ENCODE measurements at regions of chr2 and their contacts with region 1.

Region 1: GRCh38 chr2:128027801-128028667 is at the start of gene SAP130:
- DNase-seq: peak; percentile 98
- ATAC-seq: peak; percentile 76 to 89 (median 78)
- H3K4me3 ChIP-seq: peak within 1 kb of the TSS; percentile 74
- H3K4me3 Mint-ChIP-seq: peak within 1 kb of the TSS; percentile 97
- H3K27ac ChIP-seq: peak within 1 kb of the TSS; percentile 75
- H3K27ac Mint-ChIP-seq: peak within 1 kb of the TSS; percentile 85 to 96
- H3K4me1 ChIP-seq: peaks cover 7% of the 10 kb centered on the region
- H3K4me1 Mint-ChIP-seq: peaks cover 9 to 26% of the 10 kb centered on the region in 2 donors
- H3K27me3 ChIP-seq: peaks cover 2% of the 10 kb centered on the region
- H3K27me3 Mint-ChIP-seq: peaks cover 6 to 13% of the 10 kb centered on the region in 2 donors
- CTCF ChIP-seq: no peak
- total RNA-seq, gene SAP130: 33.6 to 43.7 (median 36.2) TPM

Region 2: DNA sequence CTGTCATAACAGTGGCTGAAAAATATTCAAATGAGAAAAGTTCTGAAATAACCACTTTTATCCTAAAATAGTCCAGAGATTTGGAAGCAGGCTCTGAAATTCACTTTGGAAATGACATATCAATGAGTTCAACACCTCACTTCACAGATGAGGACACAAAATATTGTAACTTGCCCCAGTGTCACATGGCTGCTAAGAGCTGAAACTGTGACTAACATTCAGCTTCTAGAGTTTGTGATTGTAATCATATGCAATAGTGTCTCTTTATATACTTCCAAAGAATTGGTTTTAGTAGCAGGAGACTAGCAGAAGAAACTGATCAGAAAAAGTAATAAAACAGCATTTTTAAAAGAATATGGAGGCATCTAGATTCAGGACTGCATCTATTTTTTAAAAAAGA is 274.7 kb before region 1 on chr2:
- intact Hi-C with region 1: no loop called
- DNase-seq: no peak
- ATAC-seq: no peak
- H3K4me3 ChIP-seq: no peak overlapping the region
- H3K4me3 Mint-ChIP-seq: no peak overlapping the region
- H3K27ac ChIP-seq: no peak overlapping the region
- H3K27ac Mint-ChIP-seq: peak overlapping the region in 1 of 2 donors; percentile 23
- H3K4me1 ChIP-seq: peaks cover 7% of the 10 kb centered on the region
- H3K4me1 Mint-ChIP-seq: peaks cover 5 to 6% of the 10 kb centered on the region in 2 donors
- H3K27me3 ChIP-seq: no peaks in the 10 kb centered on the region
- H3K27me3 Mint-ChIP-seq: no peaks in the 10 kb centered on the region
- CTCF ChIP-seq: no peak

Region 3: DNA sequence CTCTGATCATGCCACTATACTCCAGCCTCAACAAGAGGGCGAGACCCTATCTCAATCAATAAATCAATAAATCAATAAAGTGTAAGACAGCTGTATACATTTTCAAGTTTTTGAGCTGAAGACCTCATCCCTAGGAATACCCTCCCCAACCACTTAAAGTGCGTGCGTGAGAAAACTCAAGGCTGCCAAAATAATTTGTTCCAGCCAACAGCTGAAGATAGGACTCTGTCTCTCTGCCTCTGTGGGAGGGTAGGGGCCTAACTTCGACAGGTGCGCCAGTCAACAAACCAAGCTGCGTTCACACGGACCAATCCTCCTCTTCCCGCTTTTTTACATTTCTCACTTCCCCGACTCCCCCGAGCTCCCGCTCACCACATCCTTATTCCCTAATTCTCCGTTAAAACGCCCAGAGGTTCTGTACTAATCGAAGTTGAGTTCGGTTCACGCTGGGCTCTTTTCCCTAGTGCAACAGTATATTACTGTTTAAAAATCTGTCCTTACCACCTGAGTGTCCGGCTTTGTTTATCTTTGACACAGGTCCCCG is 170.7 kb before region 1 on chr2:
- intact Hi-C with region 1: loop called (anchors 5 kb)
- DNase-seq: peak in 1 of 2 donors; percentile 48
- ATAC-seq: no peak
- H3K4me3 ChIP-seq: peak overlapping the region; percentile 70
- H3K4me3 Mint-ChIP-seq: peak overlapping the region; percentile 92
- H3K27ac ChIP-seq: peak overlapping the region; percentile 64
- H3K27ac Mint-ChIP-seq: peak overlapping the region; percentile 82 to 89
- H3K4me1 ChIP-seq: peaks cover 33% of the 10 kb centered on the region
- H3K4me1 Mint-ChIP-seq: peaks cover 24 to 46% of the 10 kb centered on the region in 2 donors
- H3K27me3 ChIP-seq: no peaks in the 10 kb centered on the region
- H3K27me3 Mint-ChIP-seq: no peaks in the 10 kb centered on the region
- CTCF ChIP-seq: no peak

Region 4: DNA sequence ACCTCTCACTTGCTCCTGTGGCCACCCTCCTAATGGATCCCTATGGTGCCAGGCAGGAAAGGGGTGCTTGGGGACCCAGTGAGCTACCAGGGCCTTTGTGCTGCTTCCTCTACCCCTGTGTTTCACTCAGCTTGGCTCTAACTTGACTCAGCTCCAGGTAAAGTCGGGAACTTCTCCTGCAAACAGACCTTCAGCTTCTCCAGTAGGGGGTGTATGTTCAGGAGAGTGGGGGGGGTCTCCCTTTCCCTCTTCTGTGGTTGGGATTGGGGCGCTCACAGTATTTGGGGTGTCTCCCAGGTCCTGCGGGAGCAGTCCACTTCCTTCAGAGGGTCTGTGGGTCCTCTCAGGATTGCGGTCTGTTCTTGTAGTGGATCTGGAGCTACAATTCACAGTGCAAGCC is 26.1 kb after region 1 on chr2:
- intact Hi-C with region 1: no loop called
- DNase-seq: no peak
- ATAC-seq: no peak
- H3K4me3 ChIP-seq: no peak overlapping the region
- H3K4me3 Mint-ChIP-seq: no peak overlapping the region
- H3K27ac ChIP-seq: no peak overlapping the region
- H3K27ac Mint-ChIP-seq: no peak overlapping the region
- H3K4me1 ChIP-seq: no peaks in the 10 kb centered on the region
- H3K4me1 Mint-ChIP-seq: no peaks in the 10 kb centered on the region
- H3K27me3 ChIP-seq: peaks cover 2% of the 10 kb centered on the region
- H3K27me3 Mint-ChIP-seq: peaks cover 29 to 36% of the 10 kb centered on the region in 2 donors
- CTCF ChIP-seq: no peak

Region 5: DNA sequence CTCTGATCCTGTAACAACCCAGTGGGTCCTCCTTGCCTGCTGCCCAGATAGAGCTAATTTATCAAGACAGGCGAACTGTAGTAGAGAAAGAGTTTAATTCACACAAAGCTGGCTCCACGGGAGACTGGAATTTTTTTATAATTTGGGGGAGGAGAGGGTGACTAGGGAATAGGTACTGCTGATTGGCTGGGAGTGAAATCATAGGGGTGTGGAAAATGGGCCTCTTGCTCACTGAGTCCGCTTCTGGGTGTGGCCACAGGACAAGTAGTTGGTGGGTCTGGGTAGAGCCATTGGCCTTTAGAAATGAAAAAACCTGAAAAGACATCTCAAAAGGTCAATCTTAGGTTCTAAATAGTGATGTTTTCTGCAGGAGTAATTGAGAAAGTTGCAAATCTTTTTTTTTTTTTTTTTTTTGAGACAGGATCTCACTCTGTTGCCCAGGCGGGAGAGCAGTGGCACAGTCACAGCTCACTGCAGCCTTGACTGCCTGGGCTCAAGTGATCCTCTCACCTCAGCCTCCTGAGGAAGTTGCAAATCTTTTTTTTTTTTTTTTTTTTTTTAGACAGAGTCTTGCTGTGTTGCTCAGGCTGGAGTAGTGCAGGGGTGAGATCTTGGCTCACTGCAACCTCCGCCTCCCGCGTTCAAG is 48.5 kb after region 1 on chr2:
- intact Hi-C with region 1: no loop called
- DNase-seq: no peak
- ATAC-seq: no peak
- H3K4me3 ChIP-seq: no peak overlapping the region
- H3K4me3 Mint-ChIP-seq: no peak overlapping the region
- H3K27ac ChIP-seq: no peak overlapping the region
- H3K27ac Mint-ChIP-seq: no peak overlapping the region
- H3K4me1 ChIP-seq: no peaks in the 10 kb centered on the region
- H3K4me1 Mint-ChIP-seq: no peaks in the 10 kb centered on the region
- H3K27me3 ChIP-seq: no peaks in the 10 kb centered on the region
- H3K27me3 Mint-ChIP-seq: peaks cover 3 to 14% of the 10 kb centered on the region in 2 donors
- CTCF ChIP-seq: no peak

Region 6: GRCh38 chr2:128090945-128091725 is 63.1 kb after region 1 on chr2 and contains the start of gene UGGT1:
- intact Hi-C with region 1: loop called (anchors 1 kb)
- DNase-seq: peak; percentile 89 to 98
- ATAC-seq: peak; percentile 94 to 99 (median 95)
- H3K4me3 ChIP-seq: peak within 1 kb of the TSS; percentile 94
- H3K4me3 Mint-ChIP-seq: peak within 1 kb of the TSS; percentile 96
- H3K27ac ChIP-seq: peak within 1 kb of the TSS; percentile 85
- H3K27ac Mint-ChIP-seq: peak within 1 kb of the TSS; percentile 94 to 96
- H3K4me1 ChIP-seq: peaks cover 6% of the 10 kb centered on the region
- H3K4me1 Mint-ChIP-seq: peaks cover 41 to 46% of the 10 kb centered on the region in 2 donors
- H3K27me3 ChIP-seq: no peaks in the 10 kb centered on the region
- H3K27me3 Mint-ChIP-seq: peaks cover 0 to 3% of the 10 kb centered on the region in 2 donors
- CTCF ChIP-seq: no peak
- total RNA-seq, gene UGGT1: 48.2 to 70.3 (median 60.7) TPM